ENCODE measurements at regions of chr19 and their contacts with region 1.

Region 1: GRCh38 chr19:40716655-40717324 is at the starts of genes COQ8B and ITPKC:
- DNase-seq: peak; percentile 100
- ATAC-seq: peak; percentile 65
- H3K4me3 Mint-ChIP-seq: peak within 1 kb of the TSS; percentile 93
- H3K27ac Mint-ChIP-seq: peak within 1 kb of the TSS; percentile 98
- H3K4me1 Mint-ChIP-seq: peaks cover 59% of the 10 kb centered on the region
- H3K27me3 Mint-ChIP-seq: no peaks in the 10 kb centered on the region
- total RNA-seq, gene COQ8B: 21.2 to 29.9 TPM
- total RNA-seq, gene ITPKC: 4.6 to 5.6 TPM

Region 2: DNA sequence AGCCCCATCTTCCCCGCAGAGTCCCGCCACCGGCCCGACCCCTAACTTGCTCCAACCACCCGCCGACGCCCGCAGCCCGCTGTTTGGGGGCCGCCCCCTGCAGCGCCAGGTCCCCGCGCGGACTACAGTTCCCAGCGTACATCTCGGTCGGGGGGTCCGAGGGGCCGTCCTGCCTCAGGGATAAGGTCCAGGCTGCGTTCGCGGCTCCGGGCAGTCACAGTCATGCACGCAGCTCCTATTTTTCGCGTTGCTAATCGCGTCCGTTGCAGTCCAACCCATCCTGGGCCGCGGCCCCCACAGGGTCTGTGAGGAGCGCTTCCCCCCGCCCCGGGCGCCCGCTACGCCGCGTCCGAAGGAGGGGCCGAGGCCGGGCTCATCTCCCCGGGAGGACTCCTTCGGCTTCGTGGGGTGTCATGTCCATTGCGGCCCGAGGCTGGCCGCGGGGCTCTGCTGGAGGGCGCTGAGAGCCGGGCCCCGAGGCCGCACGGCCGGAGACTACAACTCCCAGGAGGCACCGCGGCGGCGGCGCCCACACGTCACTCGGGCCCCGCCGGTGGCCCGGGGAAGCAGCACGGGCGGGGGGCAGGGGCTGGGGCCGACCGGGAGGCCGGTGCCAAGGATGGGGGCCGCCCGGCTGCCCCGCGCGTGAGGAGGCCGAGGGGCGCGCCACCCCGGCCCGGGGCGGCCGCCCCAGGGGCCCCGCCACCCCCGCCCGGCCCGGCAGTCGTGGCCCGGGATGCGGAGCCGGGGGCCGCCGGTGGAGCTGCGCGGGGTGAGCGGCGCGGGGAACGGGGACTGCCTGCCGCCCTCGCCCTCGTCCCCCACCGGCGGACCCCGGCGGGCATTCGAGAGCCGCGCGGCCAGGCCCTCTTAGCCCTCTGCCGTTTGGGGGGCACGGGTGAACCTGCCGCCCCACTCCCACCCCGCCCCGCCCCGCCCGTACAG is 525.6 kb before region 1 on chr19 and contains the start of gene MAP3K10:
- CTCF ChIA-PET with region 1: no interaction called
- POLR2A ChIA-PET with region 1: no interaction called
- intact Hi-C with region 1: loop called in 1 of 2 experiments (anchors 2 kb)
- DNase-seq: peak; percentile 89
- ATAC-seq: peak; percentile 88
- H3K4me3 Mint-ChIP-seq: peak within 1 kb of the TSS; percentile 80
- H3K27ac Mint-ChIP-seq: peak within 1 kb of the TSS; percentile 92
- H3K4me1 Mint-ChIP-seq: peaks cover 20% of the 10 kb centered on the region
- H3K27me3 Mint-ChIP-seq: no peaks in the 10 kb centered on the region
- total RNA-seq, gene MAP3K10: 8.7 to 10.8 TPM

Region 3: GRCh38 chr19:40465557-40466150 is 251.1 kb before region 1 on chr19 and contains the start of gene BLVRB:
- CTCF ChIA-PET with region 1: no interaction called
- POLR2A ChIA-PET with region 1: no interaction called
- intact Hi-C with region 1: loop called in 1 of 2 experiments (anchors 10 kb)
- DNase-seq: peak; percentile 100
- ATAC-seq: peak; percentile 84
- H3K4me3 Mint-ChIP-seq: peak within 1 kb of the TSS; percentile 77
- H3K27ac Mint-ChIP-seq: peak within 1 kb of the TSS; percentile 87
- H3K4me1 Mint-ChIP-seq: peaks cover 30% of the 10 kb centered on the region
- H3K27me3 Mint-ChIP-seq: peaks cover 11% of the 10 kb centered on the region
- total RNA-seq, gene BLVRB: 34.1 to 35.6 TPM

Region 4: GRCh38 chr19:40662921-40663694 is 53.7 kb before region 1 on chr19:
- CTCF ChIA-PET with region 1: interaction called, 3 read pairs
- POLR2A ChIA-PET with region 1: no interaction called
- intact Hi-C with region 1: loop called (anchors 1 to 2 kb)
- DNase-seq: peak; percentile 96
- ATAC-seq: peak; percentile 81
- H3K4me3 Mint-ChIP-seq: peak overlapping the region; percentile 66
- H3K27ac Mint-ChIP-seq: peak overlapping the region; percentile 77
- H3K4me1 Mint-ChIP-seq: peaks cover 19% of the 10 kb centered on the region
- H3K27me3 Mint-ChIP-seq: no peaks in the 10 kb centered on the region

Region 5: DNA sequence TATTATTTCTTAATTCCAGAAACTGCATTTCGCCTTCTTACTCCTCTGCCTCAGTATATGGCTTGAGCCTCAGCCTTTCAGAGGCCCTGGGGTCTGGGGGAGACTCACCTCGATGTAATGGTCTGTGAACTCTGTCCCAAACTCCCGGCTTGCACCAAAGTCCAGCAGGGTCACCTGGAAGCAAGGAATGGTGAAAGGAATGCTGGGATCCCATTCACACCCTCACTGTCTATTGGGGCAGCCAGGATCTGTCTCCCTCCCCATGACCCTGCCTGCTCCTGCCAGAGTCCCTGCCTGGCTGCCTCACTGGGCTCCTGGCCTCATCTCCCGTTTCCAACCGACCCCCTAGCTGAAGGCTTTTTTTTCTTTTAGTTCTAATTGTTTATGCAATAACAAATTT is 20.9 kb before region 1 on chr19:
- CTCF ChIA-PET with region 1: no interaction called
- POLR2A ChIA-PET with region 1: no interaction called
- intact Hi-C with region 1: no loop called
- DNase-seq: no peak
- ATAC-seq: no peak
- H3K4me3 Mint-ChIP-seq: no peak overlapping the region
- H3K27ac Mint-ChIP-seq: no peak overlapping the region
- H3K4me1 Mint-ChIP-seq: peaks cover 5% of the 10 kb centered on the region
- H3K27me3 Mint-ChIP-seq: no peaks in the 10 kb centered on the region

Region 6: DNA sequence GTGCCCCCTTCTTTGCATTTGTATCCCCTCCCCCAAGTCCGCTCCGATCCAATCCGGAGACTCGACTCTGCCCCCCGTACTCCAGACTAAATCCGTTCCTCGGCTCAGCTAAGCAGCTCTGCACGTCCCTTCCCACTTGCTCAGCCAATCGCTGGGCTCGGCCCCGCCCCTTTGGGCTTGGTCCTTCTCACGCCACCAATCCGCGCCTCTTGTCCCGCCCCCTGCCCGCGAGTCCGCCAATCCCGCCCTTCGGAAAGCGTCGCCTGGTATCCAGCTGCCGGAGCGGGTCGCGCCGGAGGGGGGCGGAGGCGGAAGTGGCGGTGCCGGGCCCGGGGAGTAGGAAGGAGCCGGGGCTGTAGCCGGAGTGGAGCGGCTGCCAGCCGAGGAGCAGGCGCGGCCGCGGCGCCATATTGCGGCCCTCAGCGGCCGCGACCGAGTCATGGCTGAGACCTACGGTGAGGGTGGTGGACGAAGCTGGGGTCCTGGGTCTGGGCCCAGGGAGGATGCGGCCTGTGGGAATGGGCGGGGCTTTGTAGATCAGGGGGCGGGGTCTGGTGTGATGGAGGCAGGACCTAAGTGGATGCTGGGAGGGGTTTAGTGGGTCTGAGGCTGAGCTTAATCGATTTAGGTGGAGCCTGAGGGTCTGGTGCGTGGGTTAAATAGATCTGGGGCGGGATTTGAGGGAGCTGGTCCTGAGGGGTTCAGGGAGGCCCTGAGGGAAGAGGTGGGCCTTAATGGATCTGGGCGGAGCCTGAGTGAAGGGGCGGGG is 61.3 kb after region 1 on chr19 and contains the start of gene RAB4B:
- CTCF ChIA-PET with region 1: interaction called, 8 read pairs
- POLR2A ChIA-PET with region 1: interaction called, 6 read pairs
- intact Hi-C with region 1: loop called (anchors 1 kb)
- DNase-seq: peak; percentile 100
- ATAC-seq: peak; percentile 79
- H3K4me3 Mint-ChIP-seq: peak within 1 kb of the TSS; percentile 84
- H3K27ac Mint-ChIP-seq: peak within 1 kb of the TSS; percentile 94
- H3K4me1 Mint-ChIP-seq: peaks cover 38% of the 10 kb centered on the region
- H3K27me3 Mint-ChIP-seq: no peaks in the 10 kb centered on the region
- total RNA-seq, gene RAB4B: 26.4 to 33.7 TPM

Region 7: DNA sequence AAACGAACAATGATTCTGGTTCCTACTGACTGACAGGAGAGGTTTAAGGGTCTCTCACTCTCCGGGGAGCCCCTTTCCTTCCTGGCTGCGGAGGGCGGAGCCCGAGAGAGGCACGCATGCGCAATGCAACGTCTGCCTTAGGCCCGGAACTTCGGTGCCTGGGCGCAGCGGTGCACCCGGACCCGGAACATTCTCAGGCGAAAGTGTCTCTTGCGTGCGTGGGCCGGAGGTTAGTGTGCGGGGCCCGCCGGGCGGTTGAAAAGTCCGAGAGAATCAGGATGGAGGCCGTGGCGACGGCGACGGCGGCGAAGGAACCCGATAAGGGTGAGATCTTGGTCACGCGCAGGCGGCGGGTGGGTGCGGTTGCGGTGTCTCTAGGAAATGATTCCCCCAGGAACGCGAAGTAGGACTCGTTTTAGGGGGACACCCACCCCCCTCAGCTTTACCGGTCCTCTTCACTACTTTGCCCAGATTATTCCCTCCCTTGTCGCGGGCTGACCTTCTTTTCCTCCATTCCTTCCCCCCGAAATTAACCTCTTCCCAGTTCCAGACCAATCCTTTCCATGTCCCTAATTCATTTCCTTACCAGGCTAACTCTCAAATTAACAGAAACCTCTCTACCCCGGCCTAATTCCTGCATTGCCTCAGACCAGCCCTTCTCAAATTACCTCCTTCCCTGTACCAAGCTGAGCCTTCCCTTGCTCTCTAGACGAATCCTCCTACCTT is 593.4 kb after region 1 on chr19 and contains the start of gene CCDC97:
- CTCF ChIA-PET with region 1: no interaction called
- POLR2A ChIA-PET with region 1: interaction called, 4 read pairs
- intact Hi-C with region 1: loop called in 1 of 2 experiments (anchors 5 kb)
- DNase-seq: peak; percentile 92
- ATAC-seq: peak; percentile 66
- H3K4me3 Mint-ChIP-seq: peak within 1 kb of the TSS; percentile 91
- H3K27ac Mint-ChIP-seq: peak within 1 kb of the TSS; percentile 97
- H3K4me1 Mint-ChIP-seq: peaks cover 63% of the 10 kb centered on the region
- H3K27me3 Mint-ChIP-seq: no peaks in the 10 kb centered on the region
- total RNA-seq, gene CCDC97: 21.2 to 21.4 TPM

Measured in activated CD4-positive, alpha-beta T cell treated with anti-CD3 and anti-CD28 coated beads for 36 hours (primary cell).